ENCODE measurements at regions of chr5 and their contacts with region 1.

Region 1: DNA sequence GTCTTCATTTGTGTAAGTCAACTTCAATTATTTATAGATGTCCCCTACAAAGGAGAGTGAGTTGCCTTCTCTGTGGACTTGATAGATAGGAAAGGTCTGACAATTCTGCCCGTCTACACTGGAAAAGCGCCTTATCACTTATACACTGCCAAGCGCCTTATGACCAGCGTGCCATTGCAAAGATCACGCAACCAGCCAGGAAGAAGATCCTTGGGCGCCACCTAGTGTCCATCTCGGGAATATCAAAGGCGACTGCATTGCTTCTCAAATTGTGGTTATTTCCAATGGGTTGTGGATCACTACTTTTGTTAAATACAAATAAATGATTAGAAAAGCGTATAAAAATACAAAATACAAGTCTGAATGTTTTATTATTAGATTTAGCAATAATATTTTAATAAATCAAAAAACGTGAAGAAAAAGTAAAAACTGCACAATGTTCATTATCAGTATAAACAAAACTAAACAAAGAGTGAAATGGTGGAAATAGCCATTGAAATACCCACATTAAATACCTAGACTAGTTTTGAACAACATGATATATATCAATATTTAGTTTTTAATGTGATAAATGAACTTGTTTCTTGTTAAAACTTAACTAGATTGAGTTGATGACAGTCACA is 27.8 kb downstream of the SUB1 start:
- DNase-seq: peak; percentile 46
- ATAC-seq: peak; percentile 90
- H3K4me3 ChIP-seq: no peak overlapping the region
- H3K27ac ChIP-seq: no peak overlapping the region
- H3K4me1 ChIP-seq: no peaks in the 10 kb centered on the region
- H3K27me3 ChIP-seq: no peaks in the 10 kb centered on the region
- CTCF ChIP-seq: peak; percentile 80 to 96 (median 95); a peak in 5 of 6 replicates
- EP300 ChIP-seq: no peak
- POLR2A ChIP-seq: no peak
- RAD21 ChIP-seq: peak; percentile 98

Region 2: GRCh38 chr5:32406650-32407049 is 206.5 kb before region 1 on chr5:
- CTCF ChIA-PET with region 1: interaction called, 6 read pairs
- POLR2A ChIA-PET with region 1: interaction called, 5 read pairs
- RAD21 ChIA-PET with region 1: no interaction called
- SMC1A ChIA-PET with region 1: interaction called, 4 read pairs
- in situ Hi-C with region 1: no loop called
- intact Hi-C with region 1: loop called (anchors 2 kb)
- DNase-seq: no peak
- ATAC-seq: peak; percentile 26; the same call in 1 of the 3 replicates
- H3K4me3 ChIP-seq: no peak overlapping the region
- H3K27ac ChIP-seq: no peak overlapping the region
- H3K4me1 ChIP-seq: no peaks in the 10 kb centered on the region
- H3K27me3 ChIP-seq: no peaks in the 10 kb centered on the region
- CTCF ChIP-seq: no peak
- EP300 ChIP-seq: no peak
- POLR2A ChIP-seq: no peak
- RAD21 ChIP-seq: no peak

Region 3: DNA sequence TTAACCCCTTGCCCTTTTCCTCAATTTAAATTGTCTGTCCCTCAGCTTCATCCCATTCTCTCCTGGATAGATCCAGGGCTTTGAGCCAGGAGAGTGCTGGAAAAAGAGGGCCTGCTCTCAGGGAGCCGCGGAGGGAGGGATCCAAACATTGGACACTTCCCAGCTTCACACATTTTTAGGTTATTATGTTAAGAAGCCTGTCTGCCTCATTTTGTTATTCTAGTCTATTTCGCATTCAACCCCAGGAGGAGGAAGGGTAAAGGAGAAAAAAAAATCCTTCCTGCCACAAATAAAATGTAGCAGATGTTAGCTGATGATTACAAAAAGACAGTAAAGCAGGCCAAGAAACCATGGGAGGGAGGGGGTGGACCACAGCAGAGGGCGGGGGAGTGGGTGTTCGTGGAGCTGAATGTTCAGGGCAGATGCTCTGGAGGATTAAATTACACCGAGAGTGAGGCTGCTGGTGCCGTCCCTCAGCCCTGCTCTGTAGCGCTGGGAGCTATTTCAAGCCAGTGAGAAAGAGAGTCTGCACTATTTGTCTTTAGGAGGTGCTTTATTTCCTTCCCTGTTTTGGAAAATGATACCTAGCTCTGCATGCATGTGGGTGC is 108.1 kb before region 1 on chr5:
- CTCF ChIA-PET with region 1: interaction called, 11 read pairs
- POLR2A ChIA-PET with region 1: no interaction called
- RAD21 ChIA-PET with region 1: no interaction called
- SMC1A ChIA-PET with region 1: interaction called, 4 read pairs
- in situ Hi-C with region 1: no loop called
- intact Hi-C with region 1: no loop called
- DNase-seq: no peak
- ATAC-seq: peak; percentile 53
- H3K4me3 ChIP-seq: no peak overlapping the region
- H3K27ac ChIP-seq: no peak overlapping the region
- H3K4me1 ChIP-seq: peaks cover 9% of the 10 kb centered on the region
- H3K27me3 ChIP-seq: peaks cover 0 to 7% of the 10 kb centered on the region in 2 experiments; a peak in 1 of 4 replicates
- CTCF ChIP-seq: no peak
- EP300 ChIP-seq: no peak
- POLR2A ChIP-seq: no peak
- RAD21 ChIP-seq: no peak

Region 4: GRCh38 chr5:32566319-32567111 is 46.6 kb before region 1 on chr5:
- CTCF ChIA-PET with region 1: no interaction called
- POLR2A ChIA-PET with region 1: no interaction called
- RAD21 ChIA-PET with region 1: no interaction called
- SMC1A ChIA-PET with region 1: no interaction called
- in situ Hi-C with region 1: no loop called
- intact Hi-C with region 1: no loop called
- DNase-seq: no peak
- ATAC-seq: no peak
- H3K4me3 ChIP-seq: no peak overlapping the region
- H3K27ac ChIP-seq: no peak overlapping the region
- H3K4me1 ChIP-seq: peaks cover 7% of the 10 kb centered on the region
- H3K27me3 ChIP-seq: no peaks in the 10 kb centered on the region
- CTCF ChIP-seq: no peak
- EP300 ChIP-seq: no peak
- POLR2A ChIP-seq: no peak
- RAD21 ChIP-seq: no peak

Region 5: GRCh38 chr5:32668552-32668951 is 55.4 kb after region 1 on chr5:
- CTCF ChIA-PET with region 1: no interaction called
- POLR2A ChIA-PET with region 1: no interaction called
- RAD21 ChIA-PET with region 1: no interaction called
- SMC1A ChIA-PET with region 1: no interaction called
- in situ Hi-C with region 1: no loop called
- intact Hi-C with region 1: no loop called
- DNase-seq: no peak
- ATAC-seq: no peak
- H3K4me3 ChIP-seq: no peak overlapping the region
- H3K27ac ChIP-seq: no peak overlapping the region
- H3K4me1 ChIP-seq: no peaks in the 10 kb centered on the region
- H3K27me3 ChIP-seq: no peaks in the 10 kb centered on the region
- CTCF ChIP-seq: no peak
- EP300 ChIP-seq: no peak
- POLR2A ChIP-seq: no peak
- RAD21 ChIP-seq: no peak